WTC11 (cell line): ENCODE measurements at regions of chr17 and their contacts with region 1.

Region 1: DNA sequence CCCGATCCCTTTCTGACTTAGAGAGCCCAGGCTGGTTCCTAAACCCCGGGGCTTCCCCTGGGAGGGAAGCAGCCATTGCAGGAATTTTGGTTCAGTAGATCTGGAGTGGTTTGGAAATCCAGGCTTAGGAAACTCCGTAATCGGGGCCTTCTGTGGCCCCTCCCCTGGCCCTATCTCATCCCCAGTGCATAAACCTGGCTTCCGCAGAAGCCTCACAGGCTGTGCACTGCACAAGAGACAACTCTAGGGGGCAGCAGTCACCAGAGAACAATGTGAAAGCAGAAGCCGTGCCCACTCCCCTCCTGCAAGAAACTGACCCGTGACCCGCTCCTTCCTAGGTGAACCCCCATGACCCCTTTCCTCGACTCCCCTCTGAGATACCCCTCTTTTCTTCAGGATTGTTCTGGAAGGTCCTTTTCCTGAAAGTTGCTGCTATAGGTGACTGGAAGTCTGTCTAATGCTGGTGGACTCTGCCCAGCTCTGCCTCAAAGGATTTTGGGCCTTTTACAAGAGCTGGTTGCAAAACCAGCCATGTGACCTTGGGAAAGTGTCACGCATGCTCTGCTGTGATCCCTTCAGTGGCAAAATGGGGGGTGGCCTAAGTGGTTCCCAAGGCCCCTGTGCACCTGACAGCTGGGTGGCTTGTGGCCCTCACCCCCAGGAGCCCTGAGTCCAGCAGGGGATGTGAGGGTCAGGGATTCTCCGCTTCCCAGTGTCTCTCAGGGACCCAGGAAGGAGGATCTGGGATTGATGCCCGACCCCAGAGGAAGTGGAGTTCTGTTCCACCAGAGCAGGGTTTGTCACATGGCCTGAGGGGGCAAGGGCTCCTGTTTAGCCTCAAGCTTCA is 14.4 kb downstream of the GUCY2D start:
- DNase-seq: peak; percentile 92
- ATAC-seq: peak; percentile 90
- H3K4me3 Mint-ChIP-seq: peak overlapping the region; percentile 84
- H3K27ac Mint-ChIP-seq: no peak overlapping the region
- H3K4me1 Mint-ChIP-seq: 0 out of 2 replicates have a peak, but pooled peaks cover 2% of the 10 kb centered on the region
- H3K27me3 Mint-ChIP-seq: peaks cover 23% of the 10 kb centered on the region
- CTCF ChIP-seq: peak; percentile 85

Region 2: DNA sequence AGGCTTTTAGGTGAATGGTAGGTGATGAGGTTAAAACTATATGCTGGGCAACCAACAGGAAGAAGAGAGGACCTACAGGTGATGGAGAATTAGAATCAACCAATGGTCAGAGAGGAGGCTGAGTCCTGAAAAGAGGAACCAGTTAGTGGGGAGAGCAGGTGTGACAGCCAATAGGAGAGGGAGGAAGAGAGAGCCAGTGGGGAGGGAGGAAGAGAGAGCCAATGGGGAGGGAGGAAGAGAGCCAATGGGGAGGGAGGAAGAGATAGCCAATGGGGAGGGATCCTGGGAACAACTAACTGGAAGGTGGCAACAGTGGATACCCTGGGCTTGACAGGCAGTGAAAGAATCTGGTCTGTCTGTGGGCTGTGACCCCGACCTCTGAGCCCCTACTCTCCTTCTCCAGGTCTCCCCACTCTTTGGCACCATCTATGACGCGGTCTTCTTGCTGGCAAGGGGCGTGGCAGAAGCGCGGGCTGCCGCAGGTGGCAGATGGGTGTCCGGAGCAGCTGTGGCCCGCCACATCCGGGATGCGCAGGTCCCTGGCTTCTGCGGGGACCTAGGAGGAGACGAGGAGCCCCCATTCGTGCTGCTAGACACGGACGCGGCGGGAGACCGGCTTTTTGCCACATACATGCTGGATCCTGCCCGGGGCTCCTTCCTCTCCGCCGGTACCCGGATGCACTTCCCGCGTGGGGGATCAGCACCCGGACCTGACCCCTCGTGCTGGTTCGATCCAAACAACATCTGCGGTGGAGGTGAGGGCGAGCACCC is 10.7 kb before region 1 on chr17:
- CTCF ChIA-PET with region 1: interaction called, 15 read pairs
- POLR2A ChIA-PET with region 1: no interaction called
- DNase-seq: no peak
- ATAC-seq: peak; percentile 49
- H3K4me3 Mint-ChIP-seq: no peak overlapping the region
- H3K27ac Mint-ChIP-seq: no peak overlapping the region
- H3K4me1 Mint-ChIP-seq: peaks cover 19% of the 10 kb centered on the region
- H3K27me3 Mint-ChIP-seq: peaks cover 54% of the 10 kb centered on the region
- CTCF ChIP-seq: no peak

Region 3: GRCh38 chr17:8031944-8032343 is 15.1 kb after region 1 on chr17:
- CTCF ChIA-PET with region 1: interaction called, 15 read pairs
- POLR2A ChIA-PET with region 1: no interaction called
- DNase-seq: no peak
- ATAC-seq: no peak
- H3K4me3 Mint-ChIP-seq: no peak overlapping the region
- H3K27ac Mint-ChIP-seq: no peak overlapping the region
- H3K4me1 Mint-ChIP-seq: peaks cover 4% of the 10 kb centered on the region
- H3K27me3 Mint-ChIP-seq: peaks cover 16% of the 10 kb centered on the region
- CTCF ChIP-seq: no peak